A673 (cell line): ENCODE measurements at regions of chr5 and their contacts with region 1.

Region 1: GRCh38 chr5:167899490-167900070 is 391.9 kb upstream of the WWC1 start:
- DNase-seq: peak; percentile 73
- H3K4me3 ChIP-seq: no peak overlapping the region
- H3K27ac ChIP-seq: peak overlapping the region; percentile 97
- H3K4me1 ChIP-seq: peaks cover 92% of the 10 kb centered on the region
- H3K27me3 ChIP-seq: no peaks in the 10 kb centered on the region
- CTCF ChIP-seq: no peak

Region 2: GRCh38 chr5:167642779-167643517 is 256.6 kb before region 1 on chr5:
- CTCF ChIA-PET with region 1: no interaction called
- POLR2A ChIA-PET with region 1: no interaction called
- intact Hi-C with region 1: loop called (anchors 2 kb)
- DNase-seq: peak; percentile 86
- H3K4me3 ChIP-seq: peak overlapping the region; percentile 16
- H3K27ac ChIP-seq: peak overlapping the region; percentile 90
- H3K4me1 ChIP-seq: peaks cover 55% of the 10 kb centered on the region
- H3K27me3 ChIP-seq: no peaks in the 10 kb centered on the region
- CTCF ChIP-seq: no peak

Region 3: DNA sequence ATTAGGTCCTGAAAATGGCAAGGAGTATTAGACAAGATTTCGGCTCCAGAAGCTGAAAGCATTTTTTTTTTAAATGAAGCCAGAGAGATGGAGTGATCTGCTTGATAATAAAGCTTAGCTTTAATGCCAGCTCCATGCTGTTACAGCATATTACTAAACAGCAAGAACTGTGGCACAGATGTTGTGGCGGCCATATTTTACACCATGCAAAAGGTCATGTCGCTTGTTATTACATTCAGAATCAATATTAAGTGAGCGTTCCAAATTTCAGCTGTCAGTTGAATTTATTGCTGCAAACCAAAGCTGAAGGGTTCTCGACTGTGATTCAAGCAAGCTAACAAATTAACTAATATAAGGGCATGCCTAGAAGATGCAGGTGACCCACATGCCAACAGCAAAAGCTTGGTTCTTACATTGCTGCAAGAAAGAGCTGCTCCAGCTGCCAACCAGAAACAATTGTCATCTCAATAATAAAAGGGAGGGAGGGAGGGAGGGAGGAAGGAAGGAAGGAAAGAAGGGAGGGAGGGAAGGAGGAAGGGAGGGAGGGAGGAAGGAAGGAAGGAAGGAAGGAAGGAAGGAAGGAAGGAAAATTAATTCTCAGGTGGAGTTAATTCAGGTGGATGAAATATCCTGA is 125.8 kb before region 1 on chr5:
- CTCF ChIA-PET with region 1: no interaction called
- POLR2A ChIA-PET with region 1: no interaction called
- intact Hi-C with region 1: loop called (anchors 2 kb)
- DNase-seq: peak; percentile 51
- H3K4me3 ChIP-seq: no peak overlapping the region
- H3K27ac ChIP-seq: peak overlapping the region; percentile 56
- H3K4me1 ChIP-seq: peaks cover 42% of the 10 kb centered on the region
- H3K27me3 ChIP-seq: no peaks in the 10 kb centered on the region
- CTCF ChIP-seq: no peak

Region 4: GRCh38 chr5:167984951-167985350 is 85.4 kb after region 1 on chr5:
- CTCF ChIA-PET with region 1: no interaction called
- POLR2A ChIA-PET with region 1: no interaction called
- intact Hi-C with region 1: loop called (anchors 5 kb)
- DNase-seq: no peak
- H3K4me3 ChIP-seq: no peak overlapping the region
- H3K27ac ChIP-seq: no peak overlapping the region
- H3K4me1 ChIP-seq: peaks cover 38% of the 10 kb centered on the region
- H3K27me3 ChIP-seq: no peaks in the 10 kb centered on the region
- CTCF ChIP-seq: no peak

Region 5: GRCh38 chr5:168076561-168076991 is 177.0 kb after region 1 on chr5:
- CTCF ChIA-PET with region 1: interaction called, 4 read pairs
- POLR2A ChIA-PET with region 1: no interaction called
- intact Hi-C with region 1: loop called (anchors 2 kb)
- DNase-seq: peak; percentile 89
- H3K4me3 ChIP-seq: no peak overlapping the region
- H3K27ac ChIP-seq: peak overlapping the region; percentile 63
- H3K4me1 ChIP-seq: peaks cover 53% of the 10 kb centered on the region
- H3K27me3 ChIP-seq: no peaks in the 10 kb centered on the region
- CTCF ChIP-seq: peak; percentile 80

Region 6: DNA sequence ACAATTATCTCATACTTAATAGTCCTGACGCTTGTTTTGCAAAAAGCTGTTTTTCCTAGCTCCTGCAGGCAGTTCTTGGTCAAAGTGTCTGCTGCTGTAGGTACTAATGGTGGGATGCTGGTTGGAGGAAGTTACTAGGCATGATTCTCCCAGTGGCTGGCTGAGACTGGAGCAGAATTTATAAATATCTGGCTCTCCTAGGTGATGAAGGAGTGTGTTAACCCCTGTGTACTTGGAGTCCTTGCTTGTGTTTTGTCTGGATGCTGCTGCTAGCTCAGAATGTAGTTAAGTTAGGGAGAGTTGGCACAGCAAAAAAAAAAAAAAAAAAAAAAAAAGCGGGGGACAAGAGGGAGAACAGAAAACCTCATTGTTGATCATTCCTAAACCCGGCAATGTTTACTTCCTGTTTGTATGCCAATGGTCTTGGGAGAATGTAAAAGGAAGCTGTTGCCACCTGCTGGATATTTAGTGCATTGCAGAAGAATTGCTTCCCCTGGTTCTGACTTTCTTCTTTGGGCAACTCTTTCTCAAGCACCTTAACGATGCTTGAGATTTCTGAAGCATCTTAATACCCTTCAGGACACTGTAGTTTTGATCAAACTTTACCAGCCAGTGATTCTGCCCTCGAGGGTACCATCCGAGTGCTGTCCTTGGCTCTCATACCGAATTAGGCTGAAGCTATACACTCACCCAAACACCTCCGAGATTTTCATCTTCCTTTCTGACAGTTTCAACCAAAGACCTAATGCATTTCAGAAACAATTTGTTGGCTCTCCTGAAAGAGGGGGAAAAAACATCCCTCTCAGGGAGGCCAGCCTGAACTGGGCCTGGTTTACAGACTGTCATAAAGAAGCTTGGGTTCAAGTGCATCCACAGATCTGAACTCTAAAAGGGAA is 320.2 kb after region 1 on chr5:
- CTCF ChIA-PET with region 1: no interaction called
- POLR2A ChIA-PET with region 1: no interaction called
- intact Hi-C with region 1: loop called (anchors 1 kb)
- DNase-seq: peak; percentile 83
- H3K4me3 ChIP-seq: no peak overlapping the region
- H3K27ac ChIP-seq: peak overlapping the region; percentile 44
- H3K4me1 ChIP-seq: peaks cover 47% of the 10 kb centered on the region
- H3K27me3 ChIP-seq: no peaks in the 10 kb centered on the region
- CTCF ChIP-seq: peak; percentile 78